ENCODE measurements at regions of chr3 and their contacts with region 1.

Region 1: GRCh38 chr3:124995460-124995994 is 60.3 kb downstream of the HEG1 start:
- DNase-seq: peak in 4 of 5 donors; percentile 35 to 73 (median 51)
- ATAC-seq: peak; percentile 53 to 76 (median 70)
- H3K4me3 ChIP-seq: no peak overlapping the region
- H3K27ac ChIP-seq: peak overlapping the region in 10 of 12 donors; percentile 8 to 74 (median 43)
- H3K4me1 ChIP-seq: peaks cover 5 to 80% (median 59%) of the 10 kb centered on the region in 12 donors
- H3K27me3 ChIP-seq: no peaks in the 10 kb centered on the region
- CTCF ChIP-seq: peak; percentile 56 to 84 (median 70)
- POLR2A ChIP-seq: no peak

Region 2: DNA sequence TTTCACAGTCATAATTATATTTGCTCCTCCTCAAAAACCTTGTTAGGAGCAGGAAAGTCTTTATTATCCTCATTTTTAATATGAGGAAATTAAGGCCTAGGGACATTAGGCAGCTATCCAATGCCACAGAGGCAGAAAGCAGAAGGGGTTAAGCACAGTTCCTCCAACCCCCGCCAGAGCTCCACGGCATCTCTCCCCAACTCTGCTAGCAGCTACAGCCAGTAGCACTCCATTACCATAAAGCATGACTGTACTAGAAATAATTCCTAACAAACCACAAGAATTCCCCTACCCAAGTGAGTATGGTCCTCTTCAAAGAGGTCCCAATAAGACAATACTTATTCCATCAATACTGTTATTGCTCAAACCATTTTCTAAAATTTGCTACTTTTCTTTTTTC is 50.4 kb after region 1 on chr3:
- intact Hi-C with region 1: loop called in 9 of 10 experiments (anchors 2 to 10 kb)
- DNase-seq: no peak
- ATAC-seq: no peak
- H3K4me3 ChIP-seq: no peak overlapping the region
- H3K27ac ChIP-seq: peak overlapping the region in 10 of 12 donors; percentile 80 to 98 (median 92)
- H3K4me1 ChIP-seq: peaks cover 21 to 100% (median 97%) of the 10 kb centered on the region in 12 donors
- H3K27me3 ChIP-seq: no peaks in the 10 kb centered on the region
- CTCF ChIP-seq: no peak
- POLR2A ChIP-seq: no peak

Region 3: DNA sequence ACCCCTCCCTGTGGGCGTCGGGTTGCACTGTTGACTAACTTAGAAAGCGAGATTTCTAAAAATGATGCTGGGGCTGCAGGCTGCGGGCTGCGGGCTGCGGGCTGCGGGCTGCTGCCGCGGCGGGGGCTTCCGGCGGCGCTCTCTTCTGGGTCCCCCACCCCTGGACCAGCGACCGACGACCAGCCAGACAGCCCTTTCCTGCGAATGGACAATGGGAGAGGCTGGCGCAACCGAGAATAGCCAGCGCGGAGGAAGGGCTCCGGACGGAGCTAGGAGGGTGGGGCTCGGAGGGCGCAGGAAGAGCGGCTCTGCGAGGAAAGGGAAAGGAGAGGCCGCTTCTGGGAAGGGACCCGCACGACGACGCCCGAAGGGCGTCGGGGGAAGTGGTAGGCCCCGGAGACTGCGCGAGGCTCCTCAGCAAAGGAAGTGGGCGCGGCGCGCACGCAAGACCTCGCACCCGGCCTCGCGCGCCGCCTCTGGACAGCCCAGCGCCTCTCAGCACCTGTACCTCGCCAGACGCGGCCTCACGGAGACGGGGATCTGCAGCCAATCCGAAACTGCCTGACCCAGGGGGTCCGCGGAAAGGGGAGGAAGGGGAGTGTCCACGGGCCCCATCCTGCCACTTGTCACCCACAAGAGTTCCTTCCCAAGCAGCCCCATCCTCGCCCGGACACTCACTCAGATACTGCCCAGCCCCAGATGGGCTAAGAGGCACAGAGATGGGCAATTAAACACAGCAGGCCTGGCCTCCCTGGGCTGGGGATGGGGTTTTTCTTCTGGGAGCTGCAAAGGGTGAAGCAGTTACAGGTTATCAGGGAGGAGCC is 146.3 kb after region 1 on chr3:
- intact Hi-C with region 1: loop called in 5 of 10 experiments (anchors 1 to 5 kb)
- DNase-seq: peak; percentile 84 to 89 (median 86)
- ATAC-seq: peak; percentile 47 to 88 (median 76)
- H3K4me3 ChIP-seq: peak overlapping the region in 11 of 12 donors; percentile 22 to 58 (median 46)
- H3K27ac ChIP-seq: peak overlapping the region; percentile 66 to 96 (median 79)
- H3K4me1 ChIP-seq: peaks cover 10 to 74% (median 57%) of the 10 kb centered on the region in 12 donors
- H3K27me3 ChIP-seq: no peaks in the 10 kb centered on the region
- CTCF ChIP-seq: peak; percentile 27 to 71 (median 46)
- POLR2A ChIP-seq: peak in 1 of 2 donors; percentile 13

Region 4: GRCh38 chr3:125165189-125165947 is 169.8 kb after region 1 on chr3:
- intact Hi-C with region 1: loop called (anchors 1 to 5 kb)
- DNase-seq: peak; percentile 56 to 69 (median 59)
- ATAC-seq: peak; percentile 76 to 86 (median 81)
- H3K4me3 ChIP-seq: no peak overlapping the region
- H3K27ac ChIP-seq: no peak overlapping the region
- H3K4me1 ChIP-seq: peaks cover 7 to 42% (median 20%) of the 10 kb centered on the region in 12 donors
- H3K27me3 ChIP-seq: no peaks in the 10 kb centered on the region
- CTCF ChIP-seq: peak; percentile 68 to 89 (median 80)
- POLR2A ChIP-seq: no peak

Region 5: GRCh38 chr3:125431912-125432790 is 436.6 kb after region 1 on chr3:
- intact Hi-C with region 1: loop called in 9 of 10 experiments (anchors 1 to 5 kb)
- DNase-seq: no peak
- ATAC-seq: no peak
- H3K4me3 ChIP-seq: no peak overlapping the region
- H3K27ac ChIP-seq: no peak overlapping the region
- H3K4me1 ChIP-seq: no peaks in the 10 kb centered on the region
- H3K27me3 ChIP-seq: no peaks in the 10 kb centered on the region
- CTCF ChIP-seq: no peak
- POLR2A ChIP-seq: no peak

Measured in heart left ventricle (tissue), 16 donors.